Vagina (tissue), 2 donors: ENCODE measurements at regions of chrX and their contacts with region 1.

Region 1: DNA sequence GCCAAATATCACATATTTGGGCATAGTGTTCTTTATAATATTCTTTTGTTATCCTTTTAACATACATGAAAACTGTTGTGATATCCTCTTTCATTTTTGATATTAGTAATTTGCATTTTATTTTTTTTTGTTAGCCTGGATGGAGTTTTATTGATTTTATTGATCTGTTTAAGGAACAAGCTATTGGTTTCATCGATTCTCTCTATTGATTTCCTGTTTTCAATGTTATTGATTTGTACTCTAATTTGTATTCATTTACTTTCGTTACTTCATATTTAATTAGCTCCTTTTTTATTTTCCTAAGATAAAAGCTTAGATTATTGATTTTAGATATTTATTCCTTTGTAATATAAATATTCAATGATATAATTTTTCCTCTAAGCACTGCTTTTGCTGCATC is 1334.4 kb downstream of the FAM133A start:
- DNase-seq: no peak
- H3K4me3 ChIP-seq: no peak overlapping the region
- H3K27ac ChIP-seq: no peak overlapping the region
- H3K4me1 ChIP-seq: no peaks in the 10 kb centered on the region
- H3K27me3 ChIP-seq: no peaks in the 10 kb centered on the region
- CTCF ChIP-seq: no peak
- POLR2A ChIP-seq: no peak

Region 2: GRCh38 chrX:94831364-94831763 is 177.0 kb before region 1 on chrX:
- intact Hi-C with region 1: loop called (anchors 10 kb)
- DNase-seq: no peak
- H3K4me3 ChIP-seq: no peak overlapping the region
- H3K27ac ChIP-seq: no peak overlapping the region
- H3K4me1 ChIP-seq: no peaks in the 10 kb centered on the region
- H3K27me3 ChIP-seq: no peaks in the 10 kb centered on the region
- CTCF ChIP-seq: no peak
- POLR2A ChIP-seq: no peak

Region 3: DNA sequence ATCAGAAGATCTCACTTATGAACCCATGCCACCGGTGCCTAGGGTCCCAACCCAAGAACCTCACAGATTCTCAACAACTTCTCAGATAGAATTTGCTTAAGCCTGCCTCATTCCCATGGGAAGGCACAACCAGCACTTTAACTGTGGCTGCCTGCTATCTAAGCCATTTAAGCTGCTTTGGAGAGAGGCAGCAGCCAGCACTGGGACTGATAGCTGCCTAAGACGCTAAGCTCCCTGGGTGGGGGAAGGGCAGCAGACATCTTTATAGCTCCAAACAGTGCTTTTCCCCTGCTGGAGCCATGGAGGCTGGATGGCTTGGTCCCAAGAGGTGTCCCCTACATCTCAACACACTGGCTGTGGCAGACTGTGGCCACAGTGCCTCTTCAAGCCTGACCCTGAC is 65.8 kb before region 1 on chrX:
- intact Hi-C with region 1: loop called (anchors 10 kb)
- DNase-seq: no peak
- H3K4me3 ChIP-seq: no peak overlapping the region
- H3K27ac ChIP-seq: no peak overlapping the region
- H3K4me1 ChIP-seq: no peaks in the 10 kb centered on the region
- H3K27me3 ChIP-seq: no peaks in the 10 kb centered on the region
- CTCF ChIP-seq: no peak
- POLR2A ChIP-seq: no peak